ENCODE measurements at regions of chr15 and their contacts with region 1.

Region 1: GRCh38 chr15:34865531-34865930 is 70.2 kb upstream of the ACTC1 start:
- DNase-seq: no peak
- ATAC-seq: no peak
- H3K4me3 ChIP-seq: no peak overlapping the region
- H3K4me3 Mint-ChIP-seq: no peak overlapping the region
- H3K27ac ChIP-seq: no peak overlapping the region
- H3K27ac Mint-ChIP-seq: no peak overlapping the region
- H3K4me1 ChIP-seq: no peaks in the 10 kb centered on the region
- H3K4me1 Mint-ChIP-seq: no peaks in the 10 kb centered on the region
- H3K27me3 ChIP-seq: no peaks in the 10 kb centered on the region
- H3K27me3 Mint-ChIP-seq: no peaks in the 10 kb centered on the region

Region 2: DNA sequence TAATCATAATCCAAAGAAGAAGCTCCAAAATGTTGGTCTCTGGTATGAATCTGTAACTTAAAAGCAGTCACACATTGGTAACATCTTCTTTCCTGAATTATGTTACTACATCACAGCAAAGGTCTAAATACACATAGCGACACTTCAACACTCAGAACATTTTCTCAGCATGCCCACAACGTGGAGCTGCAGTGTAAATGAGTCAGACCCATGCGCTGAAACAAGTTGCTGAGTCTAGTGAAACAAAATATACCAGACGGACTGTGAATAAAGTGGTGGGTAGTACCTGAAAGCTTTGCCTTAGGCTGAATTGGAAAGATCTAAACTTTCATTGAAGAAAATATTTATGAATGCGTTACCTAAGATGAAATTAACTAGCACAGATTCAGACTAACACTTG is 248.9 kb before region 1 on chr15:
- CTCF ChIA-PET with region 1: no interaction called
- POLR2A ChIA-PET with region 1: no interaction called
- intact Hi-C with region 1: no loop called
- DNase-seq: no peak
- ATAC-seq: no peak
- H3K4me3 ChIP-seq: no peak overlapping the region
- H3K4me3 Mint-ChIP-seq: no peak overlapping the region
- H3K27ac ChIP-seq: no peak overlapping the region
- H3K27ac Mint-ChIP-seq: no peak overlapping the region
- H3K4me1 ChIP-seq: no peaks in the 10 kb centered on the region
- H3K4me1 Mint-ChIP-seq: peaks cover 0 to 3% (median 0%) of the 10 kb centered on the region in 7 donors
- H3K27me3 ChIP-seq: peaks cover 0 to 5% of the 10 kb centered on the region in 2 donors
- H3K27me3 Mint-ChIP-seq: peaks cover 14 to 70% (median 31%) of the 10 kb centered on the region in 5 donors

Region 3: DNA sequence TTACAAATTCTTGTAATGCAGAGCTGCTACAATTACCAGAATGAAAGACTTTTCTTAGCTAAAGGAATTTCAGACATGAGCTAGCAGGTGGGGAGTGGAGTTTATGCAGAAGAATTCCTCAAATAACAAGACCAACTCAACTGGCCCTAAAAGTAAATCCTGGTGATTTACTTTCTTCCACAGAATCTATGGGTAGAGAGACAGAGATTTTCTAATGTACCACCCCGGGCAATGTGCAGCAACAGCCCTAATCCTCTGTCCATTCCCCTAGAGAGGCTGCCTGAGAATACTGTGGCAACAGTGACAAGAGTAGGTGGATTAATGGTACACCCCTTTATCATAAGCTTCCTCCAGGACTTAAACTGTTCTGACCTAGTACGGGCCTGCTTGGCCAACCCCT is 48.8 kb after region 1 on chr15:
- CTCF ChIA-PET with region 1: no interaction called
- POLR2A ChIA-PET with region 1: no interaction called
- intact Hi-C with region 1: loop called in 1 of 2 experiments (anchors 5 kb)
- DNase-seq: no peak
- ATAC-seq: no peak
- H3K4me3 ChIP-seq: no peak overlapping the region
- H3K4me3 Mint-ChIP-seq: no peak overlapping the region
- H3K27ac ChIP-seq: no peak overlapping the region
- H3K27ac Mint-ChIP-seq: peak overlapping the region in 1 of 9 donors; percentile 54
- H3K4me1 ChIP-seq: no peaks in the 10 kb centered on the region
- H3K4me1 Mint-ChIP-seq: peaks cover 0 to 2% (median 0%) of the 10 kb centered on the region in 7 donors
- H3K27me3 ChIP-seq: no peaks in the 10 kb centered on the region
- H3K27me3 Mint-ChIP-seq: no peaks in the 10 kb centered on the region

Measured in naive thymus-derived CD4-positive, alpha-beta T cell (primary cell).